ENCODE measurements at regions of chr2 and their contacts with region 1.

Region 1: DNA sequence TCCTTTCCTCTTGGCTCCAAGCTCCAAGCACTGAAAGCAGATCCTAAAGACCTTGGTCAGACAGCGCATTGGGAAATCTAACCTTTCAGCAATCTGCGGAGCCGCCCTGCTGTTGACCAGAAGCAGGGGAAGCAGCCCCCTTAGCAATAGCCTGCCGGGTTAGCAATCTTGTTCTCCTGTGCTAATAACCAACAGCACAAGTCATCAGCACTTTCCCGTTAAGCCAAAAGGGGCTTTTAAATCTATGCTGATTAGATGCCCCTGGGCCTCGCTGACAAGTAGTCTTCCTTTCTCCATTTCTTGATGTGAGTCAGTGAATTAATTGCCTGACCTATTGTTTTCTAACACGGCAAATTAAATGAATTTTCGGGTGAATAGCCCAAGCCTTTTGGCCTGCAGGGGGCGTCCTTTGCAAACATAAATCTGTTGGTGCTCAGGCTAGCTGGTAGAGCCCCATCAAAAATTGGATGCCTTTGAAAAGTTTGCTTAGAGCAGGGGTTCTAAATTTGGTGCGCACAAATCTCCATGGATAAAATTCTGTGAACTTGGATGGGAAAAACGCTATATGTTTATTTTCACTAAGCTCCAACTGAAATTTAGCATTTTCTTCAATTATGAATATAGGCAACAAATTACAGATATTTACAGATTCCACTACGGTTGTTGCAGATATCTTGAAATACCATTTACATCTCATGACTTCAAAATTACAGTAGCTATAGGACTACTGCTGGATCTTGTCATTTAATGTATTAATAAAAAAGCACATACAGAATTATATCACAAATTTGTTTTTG is 24.6 kb downstream of the MAIP1 start:
- DNase-seq: peak; percentile 91
- ATAC-seq: no peak
- H3K4me3 Mint-ChIP-seq: no peak overlapping the region
- H3K27ac Mint-ChIP-seq: no peak overlapping the region
- H3K4me1 Mint-ChIP-seq: peaks cover 21% of the 10 kb centered on the region
- H3K27me3 Mint-ChIP-seq: no peaks in the 10 kb centered on the region

Region 2: DNA sequence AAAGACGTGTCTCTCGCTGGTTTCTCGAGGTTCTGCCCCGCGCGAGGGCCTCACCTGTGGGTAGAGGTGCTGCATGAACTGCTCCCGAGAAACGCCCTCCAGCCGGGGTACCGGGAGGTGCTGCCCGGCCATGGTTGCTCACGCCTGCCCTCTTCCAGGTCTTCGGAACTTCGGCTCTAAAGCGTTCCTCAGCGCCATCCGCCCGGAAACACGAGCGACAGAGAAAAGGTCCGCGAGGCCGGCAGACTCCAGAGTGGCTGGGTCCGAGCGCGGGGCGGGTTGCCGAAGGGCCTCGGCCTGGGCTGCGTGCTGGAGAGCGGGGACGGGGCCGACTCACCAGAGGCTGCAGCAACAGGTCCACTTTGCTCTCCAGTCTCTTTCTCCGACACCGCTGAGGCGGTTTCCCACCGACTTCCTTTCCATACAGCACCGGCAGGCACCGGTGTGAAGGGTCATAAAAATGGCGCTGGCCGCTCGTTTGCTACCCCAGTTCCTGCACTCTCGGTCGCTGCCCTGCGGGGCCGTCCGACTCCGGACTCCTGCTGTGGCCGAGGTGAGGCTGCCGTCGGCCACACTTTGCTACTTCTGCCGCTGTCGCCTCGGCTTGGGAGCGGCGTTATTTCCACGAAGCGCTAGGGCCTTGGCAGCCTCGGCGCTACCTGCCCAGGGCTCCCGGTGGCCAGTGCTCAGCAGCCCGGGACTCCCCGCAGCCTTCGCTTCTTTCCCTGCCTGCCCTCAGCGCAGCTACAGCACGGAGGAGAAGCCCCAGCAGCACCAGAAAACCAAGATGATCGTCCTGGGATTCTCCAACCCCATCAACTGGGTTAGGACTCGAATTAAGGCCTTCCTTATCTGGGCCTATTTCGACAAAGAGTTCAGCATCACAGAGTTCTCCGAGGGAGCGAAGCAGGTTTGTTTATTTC is 24.4 kb before region 1 on chr2 and contains the starts of genes MAIP1 and TYW5:
- CTCF ChIA-PET with region 1: no interaction called
- POLR2A ChIA-PET with region 1: no interaction called
- intact Hi-C with region 1: no loop called
- DNase-seq: peak; percentile 87
- ATAC-seq: peak; percentile 87
- H3K4me3 Mint-ChIP-seq: peak within 1 kb of the TSS; percentile 99
- H3K27ac Mint-ChIP-seq: peak within 1 kb of the TSS; percentile 95
- H3K4me1 Mint-ChIP-seq: peaks cover 50% of the 10 kb centered on the region
- H3K27me3 Mint-ChIP-seq: no peaks in the 10 kb centered on the region
- total RNA-seq, gene MAIP1: 26.1 to 27.5 TPM
- total RNA-seq, gene TYW5: 9.6 to 10.1 TPM

Region 3: DNA sequence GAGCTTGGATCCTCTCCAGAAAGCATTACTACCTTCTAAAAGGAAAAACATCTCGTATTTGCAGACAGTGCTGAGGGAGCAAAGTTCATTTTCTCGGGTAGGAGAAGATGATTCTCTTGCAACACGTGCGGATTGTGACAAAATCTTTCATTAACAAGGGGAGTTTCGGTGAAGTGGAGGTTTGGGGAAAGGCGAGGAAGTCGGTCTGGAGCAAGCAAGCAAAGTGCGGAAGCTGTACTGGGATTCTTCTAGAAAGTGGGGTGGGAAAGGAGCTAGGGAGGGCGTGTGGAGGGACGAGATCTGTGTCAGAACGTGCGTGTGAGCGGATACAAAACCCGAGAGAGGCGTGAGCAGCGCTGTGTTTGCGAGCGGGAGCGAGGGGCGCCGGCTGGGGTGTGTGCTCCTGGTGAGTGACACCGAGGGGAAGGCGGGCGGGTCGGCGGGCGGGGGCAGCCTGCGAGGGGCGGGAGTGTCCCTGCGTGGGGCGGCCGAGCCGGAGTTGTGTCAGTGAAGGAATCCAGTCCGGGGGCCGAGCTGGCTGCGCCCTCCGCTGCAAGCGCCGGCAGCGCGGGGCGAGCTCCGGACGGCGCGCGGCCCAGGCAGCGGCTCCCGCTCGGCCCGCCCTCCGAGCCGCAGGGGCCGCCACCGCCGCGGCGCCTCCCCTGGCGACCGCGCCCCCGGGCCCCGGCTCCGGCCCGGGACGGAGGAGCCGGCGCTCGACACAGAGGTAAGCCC is 326.3 kb after region 1 on chr2 and contains the start of gene SPATS2L:
- CTCF ChIA-PET with region 1: no interaction called
- POLR2A ChIA-PET with region 1: no interaction called
- intact Hi-C with region 1: loop called (anchors 5 kb)
- DNase-seq: peak; percentile 75
- ATAC-seq: peak; percentile 71
- H3K4me3 Mint-ChIP-seq: peak within 1 kb of the TSS; percentile 80
- H3K27ac Mint-ChIP-seq: peak within 1 kb of the TSS; percentile 87
- H3K4me1 Mint-ChIP-seq: peaks cover 21% of the 10 kb centered on the region
- H3K27me3 Mint-ChIP-seq: peaks cover 18% of the 10 kb centered on the region
- total RNA-seq, gene SPATS2L: 14.7 to 25.8 TPM

Region 4: GRCh38 chr2:200405599-200406298 is 425.7 kb after region 1 on chr2:
- CTCF ChIA-PET with region 1: interaction called, 3 read pairs
- POLR2A ChIA-PET with region 1: no interaction called
- intact Hi-C with region 1: loop called in 1 of 2 experiments (anchors 1 kb)
- DNase-seq: no peak
- ATAC-seq: peak; percentile 99
- H3K4me3 Mint-ChIP-seq: no peak overlapping the region
- H3K27ac Mint-ChIP-seq: peak overlapping the region; percentile 45
- H3K4me1 Mint-ChIP-seq: peaks cover 29% of the 10 kb centered on the region
- H3K27me3 Mint-ChIP-seq: no peaks in the 10 kb centered on the region

Region 5: GRCh38 chr2:200471324-200471848 is 491.4 kb after region 1 on chr2:
- CTCF ChIA-PET with region 1: interaction called, 5 read pairs
- POLR2A ChIA-PET with region 1: no interaction called
- intact Hi-C with region 1: loop called (anchors 1 to 2 kb)
- DNase-seq: peak; percentile 70
- ATAC-seq: peak; percentile 16
- H3K4me3 Mint-ChIP-seq: no peak overlapping the region
- H3K27ac Mint-ChIP-seq: peak overlapping the region; percentile 4
- H3K4me1 Mint-ChIP-seq: peaks cover 39% of the 10 kb centered on the region
- H3K27me3 Mint-ChIP-seq: no peaks in the 10 kb centered on the region

Region 6: GRCh38 chr2:200578778-200579177 is 598.7 kb after region 1 on chr2:
- CTCF ChIA-PET with region 1: no interaction called
- POLR2A ChIA-PET with region 1: no interaction called
- intact Hi-C with region 1: loop called in 1 of 2 experiments (anchors 5 kb)
- DNase-seq: no peak
- ATAC-seq: peak; percentile 83
- H3K4me3 Mint-ChIP-seq: no peak overlapping the region
- H3K27ac Mint-ChIP-seq: no peak overlapping the region
- H3K4me1 Mint-ChIP-seq: peaks cover 17% of the 10 kb centered on the region
- H3K27me3 Mint-ChIP-seq: no peaks in the 10 kb centered on the region